ENCODE measurements at regions of chr19 and their contacts with region 1.

Region 1: GRCh38 chr19:4815426-4816201 is 15.9 kb downstream of the TICAM1 start:
- DNase-seq: peak; percentile 51 to 80 (median 72)
- H3K4me3 ChIP-seq: peak overlapping the region; percentile 42
- H3K4me3 Mint-ChIP-seq: peak overlapping the region; percentile 1 to 89 (median 76)
- H3K27ac ChIP-seq: no peak overlapping the region
- H3K27ac Mint-ChIP-seq: peak overlapping the region in 7 of 8 donors; percentile 34 to 91 (median 79)
- H3K4me1 ChIP-seq: peaks cover 10% of the 10 kb centered on the region
- H3K4me1 Mint-ChIP-seq: peaks cover 10 to 18% (median 17%) of the 10 kb centered on the region in 3 donors
- H3K27me3 ChIP-seq: no peaks in the 10 kb centered on the region
- H3K27me3 Mint-ChIP-seq: no peaks in the 10 kb centered on the region

Region 2: DNA sequence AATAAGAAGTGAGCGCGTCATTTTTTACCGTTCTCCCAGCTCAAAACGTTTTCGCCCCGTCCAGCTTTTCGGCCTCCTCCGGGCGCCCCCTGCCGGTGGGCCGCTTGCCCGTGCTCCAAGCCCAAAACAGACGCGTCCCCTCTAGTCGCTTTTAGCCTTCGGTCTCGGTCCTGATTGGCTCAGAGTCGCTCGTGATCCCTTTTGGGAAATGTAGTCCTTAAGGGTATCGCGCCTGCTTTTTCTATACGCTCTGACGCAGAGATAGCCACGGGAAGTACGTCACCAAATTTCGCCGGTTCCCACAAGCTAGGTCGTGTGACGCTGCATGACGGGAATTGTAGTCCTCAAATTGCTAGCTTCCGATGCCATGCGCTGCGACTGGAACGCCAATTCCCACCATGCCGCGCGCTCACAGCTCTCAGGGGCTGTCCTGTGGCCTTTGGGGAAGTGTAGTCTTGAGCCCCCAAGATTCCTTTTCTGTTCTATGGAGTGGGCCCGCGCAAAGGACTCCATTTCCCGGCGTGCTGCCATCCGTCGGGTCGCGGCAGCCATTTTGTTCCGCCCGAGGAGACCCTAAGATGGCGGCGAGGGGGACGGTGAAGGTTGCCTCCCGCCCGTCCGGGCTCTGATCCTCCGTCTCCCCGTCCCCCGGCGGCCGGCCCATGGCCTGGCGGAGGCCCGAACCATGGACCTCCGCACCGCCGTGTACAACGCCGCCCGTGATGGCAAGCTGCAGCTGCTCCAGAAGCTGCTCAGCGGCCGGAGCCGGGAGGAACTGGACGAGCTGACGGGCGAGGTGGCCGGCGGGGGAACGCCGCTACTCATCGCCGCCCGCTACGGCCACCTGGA is 24.2 kb before region 1 on chr19 and contains the start of gene FEM1A:
- CTCF ChIA-PET with region 1: interaction called, 26 read pairs
- POLR2A ChIA-PET with region 1: no interaction called
- DNase-seq: peak; percentile 98 to 100 (median 99)
- H3K4me3 ChIP-seq: peak within 1 kb of the TSS; percentile 72
- H3K4me3 Mint-ChIP-seq: peak within 1 kb of the TSS; percentile 81 to 96 (median 84)
- H3K27ac ChIP-seq: peak within 1 kb of the TSS; percentile 84
- H3K27ac Mint-ChIP-seq: peak within 1 kb of the TSS; percentile 81 to 92 (median 88)
- H3K4me1 ChIP-seq: peaks cover 26% of the 10 kb centered on the region
- H3K4me1 Mint-ChIP-seq: peaks cover 24 to 39% (median 36%) of the 10 kb centered on the region in 3 donors
- H3K27me3 ChIP-seq: no peaks in the 10 kb centered on the region
- H3K27me3 Mint-ChIP-seq: no peaks in the 10 kb centered on the region
- total RNA-seq, gene FEM1A: 25.5 to 26.0 TPM

Region 3: DNA sequence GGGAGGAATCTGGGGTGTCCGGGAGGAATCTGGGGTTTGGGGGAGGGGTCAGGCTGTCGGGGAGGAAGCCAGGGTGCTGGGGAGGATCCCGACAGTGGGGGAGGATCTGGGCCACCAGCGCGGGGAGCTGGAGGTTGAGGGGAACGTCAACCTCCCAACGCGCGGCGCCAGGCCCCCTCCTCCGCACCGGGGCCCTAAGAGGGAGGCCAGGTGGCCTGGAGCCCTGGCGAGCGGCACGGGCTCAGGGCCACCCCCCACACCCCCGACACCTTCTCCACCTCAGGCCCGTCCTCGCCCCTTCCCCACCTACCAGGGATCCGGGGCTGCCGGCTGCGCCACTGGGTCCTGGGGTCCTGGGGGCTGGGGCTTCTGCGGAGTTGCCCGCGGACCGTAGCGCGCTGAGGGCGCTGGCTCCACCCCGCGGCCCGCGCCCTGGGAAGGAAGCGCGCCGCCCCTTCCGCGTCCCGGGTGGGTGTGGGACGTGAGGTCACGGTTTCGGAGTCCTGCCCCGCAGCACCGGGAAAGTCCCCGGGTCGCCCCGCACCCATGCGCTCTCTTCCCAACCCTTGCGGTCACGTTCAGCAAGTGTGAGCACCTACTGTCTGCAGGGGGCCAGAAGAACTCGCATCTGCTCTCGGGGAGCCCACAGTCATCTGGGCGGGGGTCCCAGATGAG is 15.8 kb after region 1 on chr19 and contains the start of gene TICAM1:
- CTCF ChIA-PET with region 1: interaction called, 55 read pairs
- POLR2A ChIA-PET with region 1: interaction called, 3 read pairs
- DNase-seq: peak; percentile 71 to 83 (median 79)
- H3K4me3 ChIP-seq: peak within 1 kb of the TSS; percentile 75
- H3K4me3 Mint-ChIP-seq: peak within 1 kb of the TSS; percentile 87 to 95 (median 91)
- H3K27ac ChIP-seq: peak within 1 kb of the TSS; percentile 76
- H3K27ac Mint-ChIP-seq: peak within 1 kb of the TSS; percentile 75 to 99 (median 94)
- H3K4me1 ChIP-seq: peaks cover 18% of the 10 kb centered on the region
- H3K4me1 Mint-ChIP-seq: peaks cover 24 to 40% (median 30%) of the 10 kb centered on the region in 3 donors
- H3K27me3 ChIP-seq: no peaks in the 10 kb centered on the region
- H3K27me3 Mint-ChIP-seq: no peaks in the 10 kb centered on the region
- total RNA-seq, gene TICAM1: 24.4 to 26.5 TPM

Region 4: GRCh38 chr19:4867534-4868285 is 52.1 kb after region 1 on chr19 and contains the start of gene PLIN3:
- CTCF ChIA-PET with region 1: interaction called, 11 read pairs
- POLR2A ChIA-PET with region 1: no interaction called
- DNase-seq: peak; percentile 72 to 88 (median 84)
- H3K4me3 ChIP-seq: peak within 1 kb of the TSS; percentile 83
- H3K4me3 Mint-ChIP-seq: peak within 1 kb of the TSS; percentile 78 to 89 (median 82)
- H3K27ac ChIP-seq: peak within 1 kb of the TSS; percentile 71
- H3K27ac Mint-ChIP-seq: peak within 1 kb of the TSS; percentile 10 to 88 (median 66)
- H3K4me1 ChIP-seq: peaks cover 7% of the 10 kb centered on the region
- H3K4me1 Mint-ChIP-seq: peaks cover 10 to 18% (median 12%) of the 10 kb centered on the region in 3 donors
- H3K27me3 ChIP-seq: no peaks in the 10 kb centered on the region
- H3K27me3 Mint-ChIP-seq: no peaks in the 10 kb centered on the region
- total RNA-seq, gene PLIN3: 12.3 to 15.4 TPM

Region 5: GRCh38 chr19:5031231-5032100 is 215.9 kb after region 1 on chr19:
- CTCF ChIA-PET with region 1: interaction called, 98 read pairs
- POLR2A ChIA-PET with region 1: interaction called, 4 read pairs
- DNase-seq: peak; percentile 64 to 83 (median 74)
- H3K4me3 ChIP-seq: no peak overlapping the region
- H3K4me3 Mint-ChIP-seq: no peak overlapping the region
- H3K27ac ChIP-seq: no peak overlapping the region
- H3K27ac Mint-ChIP-seq: peak overlapping the region in 2 of 8 donors; percentile 14 to 61
- H3K4me1 ChIP-seq: no peaks in the 10 kb centered on the region
- H3K4me1 Mint-ChIP-seq: peaks cover 9 to 21% (median 13%) of the 10 kb centered on the region in 3 donors
- H3K27me3 ChIP-seq: no peaks in the 10 kb centered on the region
- H3K27me3 Mint-ChIP-seq: no peaks in the 10 kb centered on the region

Region 6: DNA sequence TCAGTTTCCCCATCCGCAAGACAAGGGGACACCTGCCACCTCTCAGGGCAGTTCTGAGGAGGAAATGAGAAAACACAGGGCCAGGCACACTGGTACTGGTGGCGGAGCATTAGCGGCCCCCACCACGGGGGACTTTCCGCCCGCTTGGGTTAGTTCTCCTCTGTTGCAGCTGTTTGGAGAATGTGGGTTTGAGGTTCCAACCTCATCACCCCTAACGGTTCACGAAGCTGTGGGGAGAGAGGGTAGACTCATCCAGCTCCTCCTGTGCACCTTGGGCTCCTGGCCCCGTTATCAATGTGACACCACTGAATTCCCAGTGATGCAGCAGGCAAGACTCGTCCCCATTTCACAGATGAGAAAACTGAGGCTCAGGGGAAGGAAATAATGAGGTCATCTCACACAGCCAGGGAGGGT is 514.7 kb after region 1 on chr19:
- CTCF ChIA-PET with region 1: no interaction called
- POLR2A ChIA-PET with region 1: no interaction called
- DNase-seq: no peak
- H3K4me3 ChIP-seq: no peak overlapping the region
- H3K4me3 Mint-ChIP-seq: no peak overlapping the region
- H3K27ac ChIP-seq: no peak overlapping the region
- H3K27ac Mint-ChIP-seq: no peak overlapping the region
- H3K4me1 ChIP-seq: no peaks in the 10 kb centered on the region
- H3K4me1 Mint-ChIP-seq: peaks cover 0 to 3% (median 3%) of the 10 kb centered on the region in 3 donors
- H3K27me3 ChIP-seq: peaks cover 10% of the 10 kb centered on the region
- H3K27me3 Mint-ChIP-seq: peaks cover 28 to 33% of the 10 kb centered on the region in 2 donors

Measured in CD8-positive, alpha-beta memory T cell (primary cell).